ENCODE measurements at regions of chr3 and their contacts with region 1.

Region 1: GRCh38 chr3:178443634-178444033 is 92.6 kb upstream of the KCNMB2 start:
- DNase-seq: no peak
- H3K4me3 Mint-ChIP-seq: no peak overlapping the region
- H3K27ac Mint-ChIP-seq: no peak overlapping the region
- H3K4me1 Mint-ChIP-seq: no peaks in the 10 kb centered on the region
- H3K27me3 Mint-ChIP-seq: no peaks in the 10 kb centered on the region
- CTCF ChIP-seq: no peak

Region 2: GRCh38 chr3:178743297-178743696 is 299.7 kb after region 1 on chr3:
- CTCF ChIA-PET with region 1: no interaction called
- intact Hi-C with region 1: loop called (anchors 10 kb)
- DNase-seq: no peak
- H3K4me3 Mint-ChIP-seq: no peak overlapping the region
- H3K27ac Mint-ChIP-seq: no peak overlapping the region
- H3K4me1 Mint-ChIP-seq: no peaks in the 10 kb centered on the region
- H3K27me3 Mint-ChIP-seq: no peaks in the 10 kb centered on the region
- CTCF ChIP-seq: no peak